ENCODE measurements at regions of chr1 and their contacts with region 1.

Region 1: DNA sequence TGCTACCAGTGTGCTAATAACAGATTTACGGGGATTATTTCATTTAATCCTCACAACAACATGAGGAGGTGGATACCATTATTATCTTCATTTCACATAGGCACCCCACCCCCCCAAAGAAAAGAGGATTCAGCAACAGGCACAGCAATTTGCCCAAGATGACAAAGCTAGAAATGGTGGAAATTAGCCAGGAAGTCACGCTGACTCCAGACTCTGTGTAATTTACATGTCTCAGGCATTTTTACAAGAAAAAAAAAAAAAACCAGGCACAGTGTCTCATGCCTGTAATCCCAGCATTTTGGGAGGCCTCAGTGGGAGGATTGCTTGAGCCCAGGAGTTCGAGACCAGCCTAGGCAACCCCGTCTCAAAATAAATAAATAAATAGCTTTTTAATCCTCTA is 37.5 kb upstream of the PRDM2 start:
- DNase-seq: no peak
- H3K4me3 Mint-ChIP-seq: no peak overlapping the region
- H3K27ac Mint-ChIP-seq: no peak overlapping the region
- H3K4me1 Mint-ChIP-seq: peaks cover 4% of the 10 kb centered on the region
- H3K27me3 Mint-ChIP-seq: peaks cover 3% of the 10 kb centered on the region

Region 2: GRCh38 chr1:13813398-13814012 is 151.0 kb after region 1 on chr1:
- CTCF ChIA-PET with region 1: interaction called, 13 read pairs
- POLR2A ChIA-PET with region 1: no interaction called
- intact Hi-C with region 1: loop called (anchors 1 kb)
- DNase-seq: peak; percentile 73
- H3K4me3 Mint-ChIP-seq: no peak overlapping the region
- H3K27ac Mint-ChIP-seq: no peak overlapping the region
- H3K4me1 Mint-ChIP-seq: peaks cover 28% of the 10 kb centered on the region
- H3K27me3 Mint-ChIP-seq: no peaks in the 10 kb centered on the region

Region 3: GRCh38 chr1:13960375-13960987 is 298.0 kb after region 1 on chr1:
- CTCF ChIA-PET with region 1: interaction called, 11 read pairs
- POLR2A ChIA-PET with region 1: no interaction called
- intact Hi-C with region 1: loop called (anchors 1 kb)
- DNase-seq: peak; percentile 73
- H3K4me3 Mint-ChIP-seq: no peak overlapping the region
- H3K27ac Mint-ChIP-seq: no peak overlapping the region
- H3K4me1 Mint-ChIP-seq: no peaks in the 10 kb centered on the region
- H3K27me3 Mint-ChIP-seq: peaks cover 22% of the 10 kb centered on the region